Activated CD4-positive, alpha-beta memory T cell treated with anti-CD3 and anti-CD28 coated beads for 36 hours (primary cell): ENCODE measurements at regions of chr7 and their contacts with region 1.

Region 1: GRCh38 chr7:104883718-104884452 is 130.1 kb upstream of the KMT2E start:
- DNase-seq: peak; percentile 86
- H3K4me3 Mint-ChIP-seq: no peak overlapping the region
- H3K27ac Mint-ChIP-seq: no peak overlapping the region
- H3K4me1 Mint-ChIP-seq: peaks cover 10% of the 10 kb centered on the region
- H3K27me3 Mint-ChIP-seq: no peaks in the 10 kb centered on the region

Region 2: GRCh38 chr7:104231054-104232046 is 652.5 kb before region 1 on chr7:
- CTCF ChIA-PET with region 1: interaction called, 11 read pairs
- POLR2A ChIA-PET with region 1: no interaction called
- intact Hi-C with region 1: no loop called
- DNase-seq: peak; percentile 46
- H3K4me3 Mint-ChIP-seq: no peak overlapping the region
- H3K27ac Mint-ChIP-seq: no peak overlapping the region
- H3K4me1 Mint-ChIP-seq: no peaks in the 10 kb centered on the region
- H3K27me3 Mint-ChIP-seq: peaks cover 10% of the 10 kb centered on the region

Region 3: DNA sequence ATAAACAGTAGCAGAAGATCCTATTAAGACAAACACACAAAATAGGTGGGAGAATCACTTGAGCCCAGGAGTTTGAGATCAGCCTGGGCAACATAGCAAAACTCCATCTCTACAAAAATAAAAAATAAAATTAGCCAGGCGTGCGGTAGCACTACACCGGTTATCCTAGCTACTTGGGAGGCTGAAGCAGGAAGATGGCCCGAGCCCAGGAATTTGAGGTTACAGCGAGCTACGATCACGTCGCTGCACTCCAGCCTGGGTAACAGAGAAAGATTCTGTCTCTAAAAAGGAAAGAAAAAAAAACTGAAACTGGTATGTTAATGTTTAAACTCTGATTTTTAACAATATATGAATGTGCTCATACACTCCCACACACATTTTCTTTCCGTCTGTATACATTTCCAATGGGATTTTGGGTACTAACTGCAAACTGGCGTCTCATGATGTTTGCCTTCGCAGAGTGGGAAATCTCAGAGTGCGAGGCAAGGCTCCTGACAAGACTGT is 10.5 kb before region 1 on chr7:
- CTCF ChIA-PET with region 1: interaction called, 10 read pairs
- POLR2A ChIA-PET with region 1: no interaction called
- intact Hi-C with region 1: no loop called
- DNase-seq: no peak
- H3K4me3 Mint-ChIP-seq: no peak overlapping the region
- H3K27ac Mint-ChIP-seq: no peak overlapping the region
- H3K4me1 Mint-ChIP-seq: peaks cover 5% of the 10 kb centered on the region
- H3K27me3 Mint-ChIP-seq: no peaks in the 10 kb centered on the region

Region 4: GRCh38 chr7:104900525-104901239 is 16.8 kb after region 1 on chr7:
- CTCF ChIA-PET with region 1: interaction called, 35 read pairs
- POLR2A ChIA-PET with region 1: interaction called, 4 read pairs
- intact Hi-C with region 1: no loop called
- DNase-seq: no peak
- H3K4me3 Mint-ChIP-seq: no peak overlapping the region
- H3K27ac Mint-ChIP-seq: no peak overlapping the region
- H3K4me1 Mint-ChIP-seq: peaks cover 4% of the 10 kb centered on the region
- H3K27me3 Mint-ChIP-seq: peaks cover 4% of the 10 kb centered on the region

Region 5: DNA sequence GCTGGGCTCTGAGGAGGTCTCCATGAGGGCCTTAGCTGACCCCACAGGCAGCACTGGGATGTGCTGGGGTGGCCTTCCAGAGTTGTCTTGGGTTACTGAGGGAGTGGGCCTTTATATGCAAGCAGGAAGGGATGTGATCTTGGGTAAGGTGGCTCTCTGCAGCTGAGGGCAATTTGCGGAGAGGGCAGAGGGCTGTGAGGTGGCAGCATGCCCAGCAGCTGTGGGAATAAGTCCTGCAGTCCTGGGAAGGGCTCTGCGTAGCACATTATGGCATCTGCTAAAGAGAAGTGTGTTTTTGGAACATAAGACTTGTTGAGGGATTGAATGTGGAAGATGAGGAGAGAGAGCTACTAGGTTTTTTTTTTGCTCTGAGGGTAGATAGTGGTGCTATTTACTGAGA is 30.5 kb after region 1 on chr7:
- CTCF ChIA-PET with region 1: interaction called, 159 read pairs
- POLR2A ChIA-PET with region 1: interaction called, 3 read pairs
- intact Hi-C with region 1: loop called (anchors 1 kb)
- DNase-seq: no peak
- H3K4me3 Mint-ChIP-seq: no peak overlapping the region
- H3K27ac Mint-ChIP-seq: no peak overlapping the region
- H3K4me1 Mint-ChIP-seq: no peaks in the 10 kb centered on the region
- H3K27me3 Mint-ChIP-seq: no peaks in the 10 kb centered on the region

Region 6: DNA sequence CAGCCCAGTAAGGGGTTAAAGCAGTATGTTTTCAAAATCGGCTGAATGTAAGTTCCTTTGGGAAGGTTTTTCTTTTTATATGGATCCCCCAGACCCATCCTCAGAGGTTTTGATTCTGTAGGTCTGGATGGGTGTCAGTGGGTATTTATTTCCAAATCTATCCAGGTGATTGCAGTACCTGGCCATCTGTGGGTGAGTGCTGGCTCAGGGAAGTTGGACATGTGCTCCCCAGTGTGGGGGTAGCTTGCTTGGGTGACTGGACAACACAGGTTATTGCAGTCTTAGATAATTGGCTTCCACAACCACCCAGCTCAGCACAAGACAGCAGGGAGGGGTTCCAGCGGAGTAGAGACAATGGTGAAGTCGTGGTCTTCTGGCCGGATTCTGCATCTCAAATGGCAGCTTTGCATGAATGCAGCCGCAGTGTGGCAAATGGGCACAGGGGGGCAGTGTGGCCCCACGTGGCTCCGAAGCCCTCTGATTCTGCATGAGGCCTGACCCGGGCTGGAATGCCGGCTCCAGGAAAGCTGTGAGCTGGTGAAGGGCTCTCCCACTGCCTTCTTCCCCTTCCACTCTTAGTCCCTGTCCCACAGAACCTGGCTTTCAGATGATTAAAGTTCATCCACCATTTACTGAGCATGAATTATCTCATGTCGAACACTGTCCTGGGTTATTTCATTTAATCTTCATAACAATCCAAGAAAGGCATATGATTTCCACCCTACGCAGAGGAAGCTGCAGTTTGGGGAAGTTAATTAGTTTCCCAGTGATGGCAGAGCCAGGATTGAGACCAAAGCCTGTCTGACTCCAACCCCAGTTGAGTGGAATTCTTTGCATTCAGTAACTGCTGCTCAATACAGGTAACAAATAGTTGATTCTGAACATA is 1292.8 kb after region 1 on chr7:
- CTCF ChIA-PET with region 1: no interaction called
- POLR2A ChIA-PET with region 1: no interaction called
- intact Hi-C with region 1: no loop called
- DNase-seq: peak; percentile 80
- H3K4me3 Mint-ChIP-seq: no peak overlapping the region
- H3K27ac Mint-ChIP-seq: no peak overlapping the region
- H3K4me1 Mint-ChIP-seq: peaks cover 5% of the 10 kb centered on the region
- H3K27me3 Mint-ChIP-seq: peaks cover 13% of the 10 kb centered on the region